PC-3 (cell line): ENCODE measurements at regions of chr2 and their contacts with region 1.

Region 1: DNA sequence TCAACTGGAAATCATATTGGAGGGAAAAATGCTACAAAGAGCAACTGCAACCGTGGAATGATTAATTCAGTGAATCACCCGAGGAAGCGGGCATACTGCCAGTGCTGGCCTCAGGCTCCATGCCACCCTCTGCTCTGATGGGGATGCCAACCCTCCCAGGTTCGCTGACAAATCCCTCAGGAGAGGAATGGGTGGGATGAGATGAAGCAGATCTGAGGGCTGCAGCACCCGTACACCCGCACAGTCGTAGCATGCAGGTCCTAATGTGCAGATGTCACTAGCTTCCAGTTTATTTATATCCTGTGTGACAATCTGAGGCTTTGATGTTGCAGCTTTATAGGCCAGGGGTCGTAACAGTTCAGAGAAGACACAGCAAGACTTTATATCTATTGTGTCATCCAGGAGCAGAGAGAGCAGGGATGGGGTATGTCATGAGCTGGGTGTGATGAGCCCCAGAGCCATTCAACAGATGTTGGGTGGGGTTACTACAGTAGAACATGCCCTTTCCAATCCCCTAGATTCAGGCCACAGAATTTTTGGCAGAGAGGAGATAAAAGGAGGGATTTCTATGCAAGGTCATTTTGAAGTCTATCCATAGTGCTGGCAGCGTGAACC is 44.6 kb downstream of the DPP4 start:
- DNase-seq: peak; percentile 96
- ATAC-seq: peak; percentile 58
- H3K4me3 ChIP-seq: no peak overlapping the region
- H3K27ac ChIP-seq: peak overlapping the region; percentile 70
- H3K4me1 ChIP-seq: peaks cover 65% of the 10 kb centered on the region
- H3K27me3 ChIP-seq: no peaks in the 10 kb centered on the region
- CTCF ChIP-seq: no peak

Region 2: DNA sequence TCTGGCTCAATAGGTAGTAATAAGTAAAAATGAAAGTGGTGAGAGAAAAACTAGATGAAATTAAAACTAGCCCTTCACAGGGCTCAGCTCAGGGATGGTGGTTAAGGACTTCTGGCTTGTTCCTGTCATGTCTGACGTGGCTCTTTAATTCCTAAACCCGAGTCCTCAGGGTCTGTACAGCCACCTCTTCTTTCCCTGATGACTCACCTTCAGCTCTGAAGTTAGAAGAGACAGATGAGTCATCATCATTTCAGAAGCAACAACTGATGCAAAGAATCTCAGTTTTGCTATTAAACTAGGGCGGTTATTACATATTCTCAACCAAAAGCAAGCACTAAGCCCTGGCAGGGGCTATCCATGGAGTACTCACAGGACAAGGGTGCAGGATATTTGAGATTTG is 1805.3 kb before region 1 on chr2:
- CTCF ChIA-PET with region 1: no interaction called
- POLR2A ChIA-PET with region 1: interaction called, 17 read pairs
- intact Hi-C with region 1: no loop called
- DNase-seq: peak; percentile 96
- ATAC-seq: peak; percentile 69
- H3K4me3 ChIP-seq: peak overlapping the region; percentile 28; the same call in 1 of the 2 replicates
- H3K27ac ChIP-seq: peak overlapping the region; percentile 87
- H3K4me1 ChIP-seq: peaks cover 94% of the 10 kb centered on the region
- H3K27me3 ChIP-seq: no peaks in the 10 kb centered on the region
- CTCF ChIP-seq: no peak

Region 3: DNA sequence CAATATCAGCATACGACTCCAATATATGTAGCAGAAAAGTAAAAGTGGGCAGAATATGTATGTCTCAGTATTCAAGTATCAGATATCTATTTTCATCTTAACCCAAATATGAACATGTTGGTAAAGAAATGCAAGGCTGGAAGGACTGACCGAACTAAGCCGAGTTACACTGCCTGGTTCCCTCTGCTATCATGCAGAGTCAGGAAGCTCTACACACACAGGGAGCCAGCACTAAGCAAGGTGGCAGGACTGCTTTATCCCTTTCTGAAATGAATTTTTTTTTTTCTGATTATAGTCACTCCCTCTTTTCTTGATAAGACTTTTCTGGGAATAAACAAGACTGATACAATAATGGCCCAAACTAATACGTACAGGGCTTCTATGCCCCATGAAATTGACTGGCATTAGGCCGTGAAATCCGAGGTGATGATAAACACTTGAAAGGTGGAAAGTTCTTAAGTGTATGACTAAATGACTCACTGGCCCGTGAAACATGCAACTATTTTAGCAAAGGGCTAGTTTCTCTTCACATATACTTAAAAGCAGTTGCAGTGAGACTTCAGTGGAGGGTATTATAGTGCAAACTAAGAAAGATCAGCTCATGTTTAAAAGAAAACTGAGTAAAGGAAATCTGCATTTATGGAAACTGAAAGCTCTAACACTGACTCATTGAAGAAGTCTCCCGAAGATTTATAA is 29.7 kb after region 1 on chr2:
- CTCF ChIA-PET with region 1: no interaction called
- POLR2A ChIA-PET with region 1: no interaction called
- intact Hi-C with region 1: no loop called
- DNase-seq: no peak
- ATAC-seq: no peak
- H3K4me3 ChIP-seq: no peak overlapping the region
- H3K27ac ChIP-seq: no peak overlapping the region
- H3K4me1 ChIP-seq: no peaks in the 10 kb centered on the region
- H3K27me3 ChIP-seq: no peaks in the 10 kb centered on the region
- CTCF ChIP-seq: no peak

Region 4: GRCh38 chr2:162073888-162074645 is 44.7 kb after region 1 on chr2 and contains the start of gene DPP4:
- CTCF ChIA-PET with region 1: no interaction called
- POLR2A ChIA-PET with region 1: no interaction called
- intact Hi-C with region 1: loop called (anchors 5 kb)
- DNase-seq: peak; percentile 62
- ATAC-seq: peak; percentile 59
- H3K4me3 ChIP-seq: peak within 1 kb of the TSS; percentile 90
- H3K27ac ChIP-seq: peak within 1 kb of the TSS; percentile 25
- H3K4me1 ChIP-seq: peaks cover 42% of the 10 kb centered on the region
- H3K27me3 ChIP-seq: no peaks in the 10 kb centered on the region
- CTCF ChIP-seq: no peak; the same call in 1 of the 2 replicates
- total RNA-seq, gene DPP4: 14.8 and 23.3 TPM in 2 replicates

Region 5: GRCh38 chr2:162091325-162092007 is 62.1 kb after region 1 on chr2:
- CTCF ChIA-PET with region 1: no interaction called
- POLR2A ChIA-PET with region 1: no interaction called
- intact Hi-C with region 1: loop called (anchors 1 kb)
- DNase-seq: peak; percentile 92
- ATAC-seq: peak; percentile 72
- H3K4me3 ChIP-seq: peak overlapping the region; percentile 22; the same call in 1 of the 2 replicates
- H3K27ac ChIP-seq: peak overlapping the region; percentile 99
- H3K4me1 ChIP-seq: peaks cover 65% of the 10 kb centered on the region
- H3K27me3 ChIP-seq: no peaks in the 10 kb centered on the region
- CTCF ChIP-seq: peak; percentile 63

Region 6: DNA sequence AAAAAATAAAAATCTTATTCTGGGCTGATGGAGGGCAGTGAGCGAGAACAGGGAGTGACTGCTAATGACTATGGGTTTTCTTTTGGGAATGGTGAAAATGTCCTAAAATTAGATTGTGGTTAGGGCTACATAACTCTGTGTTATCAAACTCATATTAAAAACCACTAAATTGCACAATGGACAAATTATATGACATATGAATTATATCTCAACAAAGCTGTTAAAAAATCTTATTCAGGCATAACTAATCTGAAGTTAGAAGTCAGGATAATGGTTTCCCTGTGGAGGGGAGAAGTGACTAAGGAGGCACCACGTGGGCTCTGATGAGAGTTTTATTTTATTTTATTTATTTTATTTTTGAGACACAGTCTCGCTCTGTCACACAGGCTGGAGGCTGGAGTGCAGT is 76.8 kb after region 1 on chr2:
- CTCF ChIA-PET with region 1: no interaction called
- POLR2A ChIA-PET with region 1: no interaction called
- intact Hi-C with region 1: loop called (anchors 5 kb)
- DNase-seq: no peak
- ATAC-seq: no peak
- H3K4me3 ChIP-seq: no peak overlapping the region
- H3K27ac ChIP-seq: peak overlapping the region; percentile 94
- H3K4me1 ChIP-seq: peaks cover 40% of the 10 kb centered on the region
- H3K27me3 ChIP-seq: no peaks in the 10 kb centered on the region
- CTCF ChIP-seq: no peak

Region 7: DNA sequence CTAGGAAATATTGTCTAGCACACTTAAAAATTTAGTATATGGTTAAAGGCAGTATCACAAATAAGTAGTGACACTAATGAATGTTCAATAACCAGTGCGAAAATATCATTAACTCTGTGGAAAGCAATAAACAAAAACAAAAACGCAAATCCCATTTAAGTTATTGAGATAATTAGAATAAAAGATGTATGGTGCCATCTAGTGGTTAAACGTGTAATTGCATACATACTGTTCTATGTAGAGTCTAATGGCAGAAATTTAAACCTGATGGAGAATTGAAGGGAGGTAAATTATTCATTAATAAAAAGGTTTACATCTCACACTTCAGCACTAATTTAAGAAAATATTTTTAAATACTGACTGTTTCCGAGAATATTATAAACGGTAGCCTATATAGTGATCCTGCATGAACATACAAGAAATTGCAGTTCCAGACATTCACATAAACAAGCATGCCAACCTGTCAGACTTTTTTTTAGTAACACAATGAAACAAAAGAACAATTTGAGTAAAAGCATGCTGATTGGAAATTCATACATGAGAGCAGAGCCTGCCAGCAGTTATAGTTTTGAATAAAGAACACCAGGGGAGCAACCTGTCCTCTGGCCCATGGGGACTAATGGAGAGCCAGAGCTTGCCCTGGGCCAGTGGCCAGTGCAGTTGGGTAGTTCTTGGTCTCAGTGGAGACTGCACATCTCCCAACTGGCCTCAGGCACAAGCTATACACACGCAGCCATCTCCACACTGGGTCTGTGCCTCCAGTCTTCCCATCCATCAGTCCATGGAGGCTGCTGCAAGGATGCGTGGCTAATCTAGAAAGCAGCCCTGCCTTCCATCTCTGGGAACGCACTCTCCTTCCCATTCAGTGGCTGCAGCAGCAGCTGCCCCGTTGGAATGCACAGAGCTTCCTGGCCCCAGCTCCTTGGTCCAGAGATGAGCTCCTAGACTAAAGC is 94.7 kb after region 1 on chr2:
- CTCF ChIA-PET with region 1: no interaction called
- POLR2A ChIA-PET with region 1: no interaction called
- intact Hi-C with region 1: loop called (anchors 5 kb)
- DNase-seq: peak; percentile 88
- ATAC-seq: peak; percentile 55
- H3K4me3 ChIP-seq: no peak overlapping the region
- H3K27ac ChIP-seq: no peak overlapping the region
- H3K4me1 ChIP-seq: peaks cover 18% of the 10 kb centered on the region
- H3K27me3 ChIP-seq: no peaks in the 10 kb centered on the region
- CTCF ChIP-seq: peak; percentile 91